ENCODE measurements at regions of chr5 and their contacts with region 1.

Region 1: GRCh38 chr5:36908544-36909260 is 32.1 kb downstream of the NIPBL start:
- DNase-seq: no peak

Region 2: GRCh38 chr5:36875790-36876388 is 32.8 kb before region 1 on chr5:
- intact Hi-C with region 1: no loop called
- DNase-seq: peak; percentile 92

Region 3: GRCh38 chr5:36944607-36945225 is 36.0 kb after region 1 on chr5:
- intact Hi-C with region 1: loop called (anchors 5 kb)
- DNase-seq: no peak

Region 4: GRCh38 chr5:37208883-37209797 is 300.4 kb after region 1 on chr5:
- intact Hi-C with region 1: no loop called
- DNase-seq: no peak

Measured in cardiac septum (tissue), 1 donor.